Activated naive CD4-positive, alpha-beta T cell treated with anti-CD3 and anti-CD28 coated beads, Interleukin-2, amount 10 ng/mL, durations not matched to agents 7 days and 5 days (primary cell): ENCODE measurements at regions of chr1 and their contacts with region 1.

Region 1: GRCh38 chr1:16243936-16244649 is 7.1 kb upstream of the CPLANE2 start:
- DNase-seq: peak; percentile 86
- H3K4me3 Mint-ChIP-seq: no peak overlapping the region
- H3K27ac Mint-ChIP-seq: no peak overlapping the region
- H3K4me1 Mint-ChIP-seq: peaks cover 19% of the 10 kb centered on the region
- H3K27me3 Mint-ChIP-seq: no peaks in the 10 kb centered on the region

Region 2: DNA sequence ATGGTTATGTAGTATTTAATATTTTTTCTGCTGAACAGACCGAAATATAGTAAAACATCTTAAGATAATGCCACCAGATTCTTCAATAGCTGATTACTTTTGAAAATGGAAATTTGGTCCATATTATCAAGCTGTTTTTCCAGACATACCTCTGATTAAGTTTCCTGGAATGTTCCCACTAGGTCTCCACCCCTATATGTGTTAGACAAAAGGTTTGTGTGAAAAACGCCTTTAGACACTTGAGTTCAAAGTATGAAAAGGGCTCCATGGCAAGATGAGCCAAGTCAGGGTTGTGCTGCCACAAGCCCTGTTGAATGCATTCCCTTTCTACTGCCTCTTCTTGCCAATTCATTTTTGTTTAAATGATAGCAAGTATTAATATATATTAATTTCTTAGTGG is 320.9 kb before region 1 on chr1:
- CTCF ChIA-PET with region 1: no interaction called
- DNase-seq: no peak
- H3K4me3 Mint-ChIP-seq: no peak overlapping the region
- H3K27ac Mint-ChIP-seq: no peak overlapping the region
- H3K4me1 Mint-ChIP-seq: peaks cover 15% of the 10 kb centered on the region
- H3K27me3 Mint-ChIP-seq: no peaks in the 10 kb centered on the region

Region 3: GRCh38 chr1:16204634-16205337 is 39.3 kb before region 1 on chr1:
- CTCF ChIA-PET with region 1: interaction called, 53 read pairs
- DNase-seq: peak; percentile 63
- H3K4me3 Mint-ChIP-seq: peak overlapping the region; percentile 63
- H3K27ac Mint-ChIP-seq: no peak overlapping the region
- H3K4me1 Mint-ChIP-seq: peaks cover 19% of the 10 kb centered on the region
- H3K27me3 Mint-ChIP-seq: no peaks in the 10 kb centered on the region

Region 4: GRCh38 chr1:16254263-16254928 is 10.3 kb after region 1 on chr1:
- CTCF ChIA-PET with region 1: interaction called, 10 read pairs
- DNase-seq: no peak
- H3K4me3 Mint-ChIP-seq: no peak overlapping the region
- H3K27ac Mint-ChIP-seq: no peak overlapping the region
- H3K4me1 Mint-ChIP-seq: peaks cover 13% of the 10 kb centered on the region
- H3K27me3 Mint-ChIP-seq: no peaks in the 10 kb centered on the region

Region 5: DNA sequence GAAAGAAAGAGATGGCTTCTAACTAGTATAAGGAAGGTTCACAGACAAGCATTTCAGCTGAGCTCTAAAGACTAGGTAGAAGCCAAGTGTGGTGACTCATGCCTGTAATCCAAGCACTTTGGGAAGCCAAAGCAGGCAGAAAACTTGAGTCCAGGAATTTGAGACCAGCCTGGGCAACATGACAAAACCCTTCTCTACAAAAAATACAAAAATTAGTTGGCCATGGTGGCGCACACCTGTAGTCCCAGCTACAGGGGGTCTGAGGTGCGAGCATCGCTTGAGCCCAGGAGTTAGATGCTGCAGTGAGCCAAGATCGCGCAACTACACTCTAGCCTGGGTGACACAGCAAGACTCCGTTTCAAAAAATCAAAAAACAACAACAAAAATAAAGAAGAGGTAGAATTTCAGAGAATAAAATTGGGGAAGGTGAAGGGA is 80.4 kb after region 1 on chr1:
- CTCF ChIA-PET with region 1: no interaction called
- DNase-seq: no peak
- H3K4me3 Mint-ChIP-seq: no peak overlapping the region
- H3K27ac Mint-ChIP-seq: no peak overlapping the region
- H3K4me1 Mint-ChIP-seq: peaks cover 2% of the 10 kb centered on the region
- H3K27me3 Mint-ChIP-seq: no peaks in the 10 kb centered on the region